ENCODE measurements at regions of chr17 and their contacts with region 1.

Region 1: GRCh38 chr17:73710095-73710592 is 65.9 kb upstream of the SDK2 start:
- DNase-seq: peak; percentile 63 to 80 (median 77)
- ATAC-seq: peak; percentile 87 to 97 (median 96)
- H3K4me3 ChIP-seq: no peak overlapping the region
- H3K27ac ChIP-seq: no peak overlapping the region
- H3K4me1 ChIP-seq: peaks cover 0 to 11% (median 3%) of the 10 kb centered on the region in 12 donors
- H3K27me3 ChIP-seq: peaks cover 0 to 23% (median 3%) of the 10 kb centered on the region in 9 donors
- CTCF ChIP-seq: peak; percentile 65 to 87 (median 78)
- POLR2A ChIP-seq: no peak

Region 2: DNA sequence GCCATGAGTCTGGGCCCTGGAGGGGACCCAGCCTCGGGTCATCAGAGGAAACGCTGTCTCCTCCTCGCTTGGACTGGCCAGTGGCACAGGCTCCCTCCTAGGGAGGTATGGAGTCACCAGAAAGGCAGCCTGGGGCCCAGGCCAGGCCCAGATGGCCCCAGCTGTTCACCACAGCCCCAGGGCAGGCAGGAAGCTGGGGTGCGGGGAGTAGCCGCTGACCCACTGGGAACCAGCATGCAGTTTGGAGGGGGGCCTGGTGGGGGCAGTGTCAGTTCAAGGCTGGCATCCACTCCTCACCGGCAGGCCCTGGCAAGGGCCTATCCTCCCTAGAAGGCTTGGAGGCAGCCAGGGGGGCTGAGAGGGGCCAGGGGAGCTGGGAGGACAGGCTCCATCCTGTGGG is 114.7 kb before region 1 on chr17:
- intact Hi-C with region 1: loop called in 1 of 10 experiments (anchors 10 kb)
- DNase-seq: peak; percentile 25 to 73 (median 66)
- ATAC-seq: peak in 3 of 4 donors; percentile 71 to 92 (median 75)
- H3K4me3 ChIP-seq: no peak overlapping the region
- H3K27ac ChIP-seq: no peak overlapping the region
- H3K4me1 ChIP-seq: peaks cover 0 to 14% (median under 1%) of the 10 kb centered on the region in 12 donors
- H3K27me3 ChIP-seq: no peaks in the 10 kb centered on the region
- CTCF ChIP-seq: peak in 9 of 12 donors; percentile 22 to 50 (median 32)
- POLR2A ChIP-seq: no peak

Region 3: GRCh38 chr17:73833775-73834488 is 123.8 kb after region 1 on chr17:
- intact Hi-C with region 1: loop called in 1 of 10 experiments (anchors 10 kb)
- DNase-seq: no peak
- ATAC-seq: no peak
- H3K4me3 ChIP-seq: no peak overlapping the region
- H3K27ac ChIP-seq: no peak overlapping the region
- H3K4me1 ChIP-seq: no peaks in the 10 kb centered on the region
- H3K27me3 ChIP-seq: peaks cover 0 to 46% (median 10%) of the 10 kb centered on the region in 9 donors
- CTCF ChIP-seq: no peak
- POLR2A ChIP-seq: no peak

Region 4: DNA sequence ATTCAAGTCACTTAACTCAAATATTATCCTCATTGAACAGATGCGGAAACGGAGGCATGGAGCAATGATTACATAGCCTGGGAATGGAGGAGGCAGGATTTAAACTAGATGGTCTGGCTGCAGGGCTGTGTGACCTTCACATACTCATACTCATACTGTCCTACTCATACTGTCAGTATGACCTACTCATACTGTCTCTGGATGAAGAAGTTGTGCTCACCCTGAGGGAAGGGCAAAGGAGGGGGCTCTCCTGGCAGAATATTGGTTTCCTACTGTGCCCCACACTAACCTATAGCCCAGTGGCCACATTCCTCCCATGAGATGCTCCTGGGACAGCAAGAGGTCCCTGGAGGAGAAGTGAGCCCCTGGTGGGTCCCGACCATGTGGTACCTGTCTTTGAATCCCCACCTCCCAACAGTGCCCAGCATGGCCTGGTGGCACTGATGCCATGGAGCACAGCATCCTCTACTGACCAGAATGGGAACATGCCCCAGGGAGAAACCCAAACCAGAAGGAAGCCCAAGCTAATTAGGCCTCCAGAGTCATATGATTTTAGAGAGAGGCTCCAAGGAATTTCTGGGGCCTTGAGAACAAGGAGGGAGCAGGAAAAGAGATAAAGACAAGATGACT is 131.4 kb after region 1 on chr17:
- intact Hi-C with region 1: loop called in 2 of 10 experiments (anchors 2 to 10 kb)
- DNase-seq: no peak
- ATAC-seq: peak in 3 of 4 donors; percentile 56 to 66 (median 66)
- H3K4me3 ChIP-seq: no peak overlapping the region
- H3K27ac ChIP-seq: no peak overlapping the region
- H3K4me1 ChIP-seq: no peaks in the 10 kb centered on the region
- H3K27me3 ChIP-seq: peaks cover 0 to 12% (median 0%) of the 10 kb centered on the region in 9 donors
- CTCF ChIP-seq: peak; percentile 31 to 68 (median 54)
- POLR2A ChIP-seq: no peak